Vagina (tissue), 2 donors: ENCODE measurements at regions of chr12 and their contacts with region 1.

Region 1: GRCh38 chr12:13670285-13670866 is 311.0 kb downstream of the GRIN2B start:
- DNase-seq: no peak
- H3K4me3 ChIP-seq: no peak overlapping the region
- H3K27ac ChIP-seq: no peak overlapping the region
- H3K4me1 ChIP-seq: no peaks in the 10 kb centered on the region
- H3K27me3 ChIP-seq: no peaks in the 10 kb centered on the region
- CTCF ChIP-seq: no peak
- POLR2A ChIP-seq: no peak

Region 2: GRCh38 chr12:13362260-13362841 is 308.0 kb before region 1 on chr12:
- intact Hi-C with region 1: loop called (anchors 5 kb)
- DNase-seq: no peak
- H3K4me3 ChIP-seq: no peak overlapping the region
- H3K27ac ChIP-seq: no peak overlapping the region
- H3K4me1 ChIP-seq: no peaks in the 10 kb centered on the region
- H3K27me3 ChIP-seq: no peaks in the 10 kb centered on the region
- CTCF ChIP-seq: peak in 2 of 3 experiments; percentile 27 to 34
- POLR2A ChIP-seq: no peak